ENCODE measurements at regions of chr11 and their contacts with region 1.

Region 1: GRCh38 chr11:74696932-74697687 is 34.1 kb downstream of the CHRDL2 start:
- DNase-seq: peak; percentile 96
- H3K4me3 ChIP-seq: peak overlapping the region; percentile 15 to 34 (median 24)
- H3K27ac ChIP-seq: peak overlapping the region; percentile 84 to 92 (median 88)
- H3K4me1 ChIP-seq: peaks cover 17 to 59% (median 52%) of the 10 kb centered on the region in 4 donors
- H3K27me3 ChIP-seq: no peaks in the 10 kb centered on the region
- CTCF ChIP-seq: no peak
- EP300 ChIP-seq: peak; percentile 96
- POLR2A ChIP-seq: peak; percentile 14

Region 2: GRCh38 chr11:74636633-74637184 is 60.4 kb before region 1 on chr11:
- intact Hi-C with region 1: loop called (anchors 5 kb)
- DNase-seq: no peak
- H3K4me3 ChIP-seq: no peak overlapping the region
- H3K27ac ChIP-seq: peak overlapping the region; percentile 55 to 87 (median 75)
- H3K4me1 ChIP-seq: peaks cover 0 to 90% (median 71%) of the 10 kb centered on the region in 4 donors
- H3K27me3 ChIP-seq: no peaks in the 10 kb centered on the region
- CTCF ChIP-seq: no peak
- EP300 ChIP-seq: no peak
- POLR2A ChIP-seq: no peak

Region 3: DNA sequence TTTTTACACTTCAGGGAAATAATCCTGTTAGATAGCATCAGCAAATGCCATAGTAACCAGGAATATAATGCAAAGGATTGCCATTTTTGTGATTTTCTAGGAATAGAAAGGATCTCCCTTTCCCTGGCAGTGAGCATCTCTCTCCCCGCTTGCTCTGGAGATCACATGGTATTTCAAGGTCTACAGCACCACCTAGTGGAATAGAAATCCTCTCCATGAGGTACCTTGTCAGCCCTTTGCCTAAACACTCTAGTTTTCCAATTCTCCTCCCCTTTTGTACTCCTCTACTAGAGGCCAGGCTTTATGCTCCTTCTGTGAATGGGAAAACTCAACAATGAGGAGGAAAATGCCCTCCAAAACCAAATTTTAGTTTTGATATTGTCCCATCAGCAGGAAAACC is 173.4 kb after region 1 on chr11:
- intact Hi-C with region 1: no loop called
- DNase-seq: no peak
- H3K4me3 ChIP-seq: no peak overlapping the region
- H3K27ac ChIP-seq: no peak overlapping the region
- H3K4me1 ChIP-seq: no peaks in the 10 kb centered on the region
- H3K27me3 ChIP-seq: no peaks in the 10 kb centered on the region
- CTCF ChIP-seq: peak in 1 of 3 experiments; percentile 7
- EP300 ChIP-seq: no peak
- POLR2A ChIP-seq: no peak

Measured in esophagus muscularis mucosa (tissue), 4 donors.